Uterus (tissue), 4 donors: ENCODE measurements at regions of chr4 and their contacts with region 1.

Region 1: DNA sequence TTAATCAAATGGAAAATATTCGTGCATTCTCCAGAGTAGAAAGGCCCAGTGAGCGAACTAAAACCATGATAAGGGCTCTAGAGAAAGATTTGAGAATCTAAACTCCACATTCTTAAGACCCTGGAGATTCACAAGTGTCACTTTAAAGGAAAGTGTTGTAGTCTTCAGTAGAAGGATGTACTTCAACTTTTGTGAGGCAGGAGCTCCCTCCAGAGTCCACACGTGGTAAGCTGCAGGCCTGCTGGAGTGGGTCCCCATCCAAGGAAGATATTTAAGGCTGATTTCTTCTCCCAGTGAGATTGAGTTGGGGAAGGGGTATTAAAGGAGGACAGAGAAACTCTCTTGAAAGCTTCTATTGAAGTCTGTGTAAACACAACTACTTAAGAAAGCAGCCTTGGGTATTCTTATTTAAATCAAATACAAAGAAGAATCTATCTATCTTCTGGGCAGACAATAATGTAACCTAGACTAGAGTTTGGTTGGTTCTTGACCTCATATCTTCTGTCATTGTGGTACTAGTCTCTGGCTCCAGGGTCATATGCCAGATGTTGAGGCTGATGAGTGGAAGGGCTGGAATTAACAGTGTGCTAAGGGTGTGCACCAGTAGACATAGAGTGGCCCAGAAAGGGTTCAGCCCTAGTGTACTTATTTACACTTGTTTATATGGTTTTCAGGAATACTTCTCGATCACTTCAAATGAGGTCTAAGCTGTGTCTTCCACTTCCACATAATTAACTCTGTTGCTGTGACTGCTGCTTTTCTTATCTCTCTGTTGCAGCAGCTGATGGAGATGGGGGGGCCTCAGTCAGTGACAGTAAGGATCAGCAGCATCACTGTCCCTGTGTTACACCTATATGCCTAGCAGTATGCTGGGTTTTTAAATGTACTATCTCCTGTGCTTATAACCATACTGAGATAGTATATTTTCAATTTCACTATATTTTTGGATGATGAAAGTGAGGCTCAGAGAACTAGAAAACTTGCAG is 76.1 kb downstream of the HMGB2 start:
- DNase-seq: peak; percentile 67 to 68
- H3K4me3 ChIP-seq: no peak overlapping the region
- H3K27ac ChIP-seq: no peak overlapping the region
- H3K4me1 ChIP-seq: peaks cover 0 to 6% of the 10 kb centered on the region in 2 donors
- H3K27me3 ChIP-seq: no peaks in the 10 kb centered on the region
- CTCF ChIP-seq: peak; percentile 66 to 79 (median 76)
- POLR2A ChIP-seq: no peak

Region 2: DNA sequence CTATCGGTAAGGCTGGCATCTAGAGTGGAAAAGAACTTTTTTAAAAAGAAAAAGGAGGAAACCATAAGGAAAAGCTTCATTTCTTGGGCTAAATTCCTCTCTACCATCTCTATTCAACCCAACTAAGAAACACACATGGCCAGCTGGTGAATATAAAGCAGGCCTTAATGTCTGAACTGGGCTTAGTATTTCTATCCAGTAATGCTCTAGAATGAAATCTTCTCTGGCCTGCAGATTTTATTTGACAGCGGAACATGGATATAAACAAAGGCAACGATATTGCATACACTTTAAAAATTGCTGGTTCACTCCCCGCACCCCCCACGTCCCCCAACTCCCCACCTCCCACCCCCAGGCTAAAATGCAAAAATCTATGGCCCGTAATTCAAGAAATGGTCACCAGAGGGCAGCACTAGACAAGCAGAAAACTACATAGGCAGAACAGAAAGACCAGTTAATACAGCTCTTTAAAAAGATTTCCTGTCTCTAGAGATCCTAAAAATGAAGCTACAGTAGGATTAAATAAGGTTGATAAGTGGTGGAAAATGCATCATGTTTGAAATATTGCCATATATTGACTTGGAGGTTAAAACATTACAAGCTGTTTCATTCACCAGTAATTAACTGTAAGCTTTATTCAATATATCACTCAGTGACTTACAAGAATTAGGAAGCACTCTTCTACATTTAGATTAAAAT is 244.6 kb before region 1 on chr4:
- intact Hi-C with region 1: loop called (anchors 10 kb)
- DNase-seq: peak in 1 of 2 donors; percentile 52
- H3K4me3 ChIP-seq: no peak overlapping the region
- H3K27ac ChIP-seq: no peak overlapping the region
- H3K4me1 ChIP-seq: peaks cover 0 to 7% of the 10 kb centered on the region in 2 donors
- H3K27me3 ChIP-seq: no peaks in the 10 kb centered on the region
- CTCF ChIP-seq: peak; percentile 62 to 86 (median 76)
- POLR2A ChIP-seq: no peak

Region 3: GRCh38 chr4:173192375-173193162 is 65.5 kb before region 1 on chr4:
- intact Hi-C with region 1: no loop called
- DNase-seq: no peak
- H3K4me3 ChIP-seq: no peak overlapping the region
- H3K27ac ChIP-seq: no peak overlapping the region
- H3K4me1 ChIP-seq: no peaks in the 10 kb centered on the region
- H3K27me3 ChIP-seq: no peaks in the 10 kb centered on the region
- CTCF ChIP-seq: no peak
- POLR2A ChIP-seq: no peak

Region 4: DNA sequence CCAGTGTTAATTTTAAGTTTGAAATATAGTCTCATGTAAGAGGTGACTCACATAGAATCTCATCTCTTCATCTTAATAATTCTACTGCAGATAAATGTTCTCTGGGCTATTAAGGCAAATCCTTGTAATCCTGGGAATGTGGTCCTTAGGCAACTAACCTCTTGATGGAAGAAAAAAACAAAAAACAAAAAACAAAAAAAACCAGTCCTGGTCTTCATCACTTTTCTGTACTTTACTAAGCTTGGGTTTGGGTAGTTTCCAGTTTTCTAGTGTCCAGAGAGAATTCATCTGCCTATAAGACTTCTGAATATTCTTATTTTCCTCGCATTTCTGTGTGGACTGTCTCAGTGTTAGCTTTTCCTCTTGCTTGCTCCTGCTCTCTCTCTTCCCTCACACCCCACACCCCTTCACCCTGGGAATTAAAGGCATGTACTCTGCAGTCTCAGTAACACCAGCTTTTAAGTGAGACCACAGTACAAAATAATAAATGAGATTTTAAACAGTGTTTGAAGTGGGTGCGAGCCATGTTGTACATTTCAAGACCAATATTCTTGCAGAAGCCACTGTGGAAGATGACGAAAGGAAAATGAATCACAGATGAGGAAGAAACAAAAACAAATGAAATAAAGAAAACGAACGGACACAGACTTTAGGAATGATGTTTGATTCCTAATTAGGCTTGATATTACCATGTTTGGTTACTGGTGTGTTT is 220.3 kb after region 1 on chr4:
- intact Hi-C with region 1: no loop called
- DNase-seq: no peak
- H3K4me3 ChIP-seq: no peak overlapping the region
- H3K27ac ChIP-seq: peak overlapping the region; percentile 46 to 70
- H3K4me1 ChIP-seq: no peaks in the 10 kb centered on the region
- H3K27me3 ChIP-seq: no peaks in the 10 kb centered on the region
- CTCF ChIP-seq: no peak
- POLR2A ChIP-seq: no peak